ENCODE measurements at regions of chr11 and their contacts with region 1.

Region 1: GRCh38 chr11:107009190-107009589 is 9.1 kb downstream of the GUCY1A2 start:
- DNase-seq: no peak
- ATAC-seq: no peak
- H3K4me3 ChIP-seq: no peak overlapping the region
- H3K27ac ChIP-seq: no peak overlapping the region
- H3K4me1 ChIP-seq: peaks cover 28% of the 10 kb centered on the region
- H3K27me3 ChIP-seq: no peaks in the 10 kb centered on the region
- CTCF ChIP-seq: peak; percentile 51

Region 2: GRCh38 chr11:107468596-107468995 is 459.4 kb after region 1 on chr11:
- CTCF ChIA-PET with region 1: no interaction called
- POLR2A ChIA-PET with region 1: no interaction called
- intact Hi-C with region 1: loop called (anchors 5 kb)
- DNase-seq: no peak
- ATAC-seq: peak; percentile 31
- H3K4me3 ChIP-seq: no peak overlapping the region
- H3K27ac ChIP-seq: no peak overlapping the region
- H3K4me1 ChIP-seq: no peaks in the 10 kb centered on the region
- H3K27me3 ChIP-seq: peaks cover 30% of the 10 kb centered on the region
- CTCF ChIP-seq: no peak

Measured in PC-3 (cell line).